B cell (primary cell): ENCODE measurements at regions of chr10 and their contacts with region 1.

Region 1: GRCh38 chr10:107814865-107815487 is 650.5 kb upstream of the SORCS1 start:
- DNase-seq: peak; percentile 63
- ATAC-seq: no peak
- H3K4me3 ChIP-seq: no peak overlapping the region
- H3K4me3 Mint-ChIP-seq: no peak overlapping the region
- H3K27ac ChIP-seq: no peak overlapping the region
- H3K27ac Mint-ChIP-seq: no peak overlapping the region
- H3K4me1 ChIP-seq: peaks cover 0 to 2% of the 10 kb centered on the region in 2 donors
- H3K4me1 Mint-ChIP-seq: no peaks in the 10 kb centered on the region
- H3K27me3 ChIP-seq: no peaks in the 10 kb centered on the region
- H3K27me3 Mint-ChIP-seq: no peaks in the 10 kb centered on the region
- CTCF ChIP-seq: peak; percentile 40

Region 2: GRCh38 chr10:107409522-107409921 is 405.5 kb before region 1 on chr10:
- CTCF ChIA-PET with region 1: interaction called, 24 read pairs
- POLR2A ChIA-PET with region 1: no interaction called
- intact Hi-C with region 1: no loop called
- DNase-seq: peak; percentile 61
- ATAC-seq: no peak
- H3K4me3 ChIP-seq: no peak overlapping the region
- H3K4me3 Mint-ChIP-seq: no peak overlapping the region
- H3K27ac ChIP-seq: no peak overlapping the region
- H3K27ac Mint-ChIP-seq: no peak overlapping the region
- H3K4me1 ChIP-seq: peaks cover 0 to 4% of the 10 kb centered on the region in 2 donors
- H3K4me1 Mint-ChIP-seq: no peaks in the 10 kb centered on the region
- H3K27me3 ChIP-seq: no peaks in the 10 kb centered on the region
- H3K27me3 Mint-ChIP-seq: no peaks in the 10 kb centered on the region
- CTCF ChIP-seq: no peak

Region 3: GRCh38 chr10:107847620-107848019 is 32.6 kb after region 1 on chr10:
- CTCF ChIA-PET with region 1: no interaction called
- POLR2A ChIA-PET with region 1: no interaction called
- intact Hi-C with region 1: no loop called
- DNase-seq: peak; percentile 43
- ATAC-seq: peak; percentile 24
- H3K4me3 ChIP-seq: peak overlapping the region in 3 of 5 experiments; percentile 5 to 21 (median 5)
- H3K4me3 Mint-ChIP-seq: peak overlapping the region; percentile 63
- H3K27ac ChIP-seq: peak overlapping the region; percentile 7 to 27
- H3K27ac Mint-ChIP-seq: peak overlapping the region; percentile 22
- H3K4me1 ChIP-seq: peaks cover 3 to 13% of the 10 kb centered on the region in 2 donors
- H3K4me1 Mint-ChIP-seq: peaks cover 8% of the 10 kb centered on the region
- H3K27me3 ChIP-seq: no peaks in the 10 kb centered on the region
- H3K27me3 Mint-ChIP-seq: no peaks in the 10 kb centered on the region
- CTCF ChIP-seq: no peak